ENCODE measurements at regions of chr16 and their contacts with region 1.

Region 1: GRCh38 chr16:68257906-68258800 is 6.2 kb upstream of the SLC7A6 start:
- DNase-seq: no peak
- ATAC-seq: no peak
- H3K4me3 Mint-ChIP-seq: no peak overlapping the region
- H3K27ac Mint-ChIP-seq: no peak overlapping the region
- H3K4me1 Mint-ChIP-seq: peaks cover 13% of the 10 kb centered on the region
- H3K27me3 Mint-ChIP-seq: no peaks in the 10 kb centered on the region
- CTCF ChIP-seq: no peak

Region 2: GRCh38 chr16:68166264-68166663 is 91.9 kb before region 1 on chr16:
- CTCF ChIA-PET with region 1: no interaction called
- POLR2A ChIA-PET with region 1: no interaction called
- intact Hi-C with region 1: no loop called
- DNase-seq: no peak
- ATAC-seq: no peak
- H3K4me3 Mint-ChIP-seq: no peak overlapping the region
- H3K27ac Mint-ChIP-seq: peak overlapping the region; percentile 38
- H3K4me1 Mint-ChIP-seq: peaks cover 2% of the 10 kb centered on the region
- H3K27me3 Mint-ChIP-seq: no peaks in the 10 kb centered on the region
- CTCF ChIP-seq: no peak

Region 3: GRCh38 chr16:68244903-68245853 is 13.0 kb before region 1 on chr16 and contains the start of gene PLA2G15:
- CTCF ChIA-PET with region 1: interaction called, 89 read pairs
- POLR2A ChIA-PET with region 1: interaction called, 22 read pairs
- intact Hi-C with region 1: no loop called
- DNase-seq: peak; percentile 97
- ATAC-seq: peak; percentile 99
- H3K4me3 Mint-ChIP-seq: peak within 1 kb of the TSS; percentile 83
- H3K27ac Mint-ChIP-seq: peak within 1 kb of the TSS; percentile 82
- H3K4me1 Mint-ChIP-seq: peaks cover 18% of the 10 kb centered on the region
- H3K27me3 Mint-ChIP-seq: no peaks in the 10 kb centered on the region
- CTCF ChIP-seq: no peak
- total RNA-seq, gene PLA2G15: 6.7 to 6.8 TPM

Measured in activated CD8-positive, alpha-beta T cell treated with anti-CD3 and anti-CD28 coated beads for 36 hours (primary cell).